ENCODE measurements at regions of chr3 and their contacts with region 1.

Region 1: GRCh38 chr3:190017521-190018288 is 103.0 kb downstream of the P3H2 start:
- DNase-seq: peak; percentile 48
- H3K4me3 ChIP-seq: no peak overlapping the region
- H3K27ac ChIP-seq: no peak overlapping the region
- H3K4me1 ChIP-seq: no peaks in the 10 kb centered on the region
- H3K27me3 ChIP-seq: no peaks in the 10 kb centered on the region
- CTCF ChIP-seq: peak; percentile 24

Region 2: GRCh38 chr3:189786479-189787064 is 231.1 kb before region 1 on chr3:
- intact Hi-C with region 1: no loop called
- DNase-seq: no peak
- H3K4me3 ChIP-seq: no peak overlapping the region
- H3K27ac ChIP-seq: no peak overlapping the region
- H3K4me1 ChIP-seq: no peaks in the 10 kb centered on the region
- H3K27me3 ChIP-seq: no peaks in the 10 kb centered on the region
- CTCF ChIP-seq: no peak

Region 3: DNA sequence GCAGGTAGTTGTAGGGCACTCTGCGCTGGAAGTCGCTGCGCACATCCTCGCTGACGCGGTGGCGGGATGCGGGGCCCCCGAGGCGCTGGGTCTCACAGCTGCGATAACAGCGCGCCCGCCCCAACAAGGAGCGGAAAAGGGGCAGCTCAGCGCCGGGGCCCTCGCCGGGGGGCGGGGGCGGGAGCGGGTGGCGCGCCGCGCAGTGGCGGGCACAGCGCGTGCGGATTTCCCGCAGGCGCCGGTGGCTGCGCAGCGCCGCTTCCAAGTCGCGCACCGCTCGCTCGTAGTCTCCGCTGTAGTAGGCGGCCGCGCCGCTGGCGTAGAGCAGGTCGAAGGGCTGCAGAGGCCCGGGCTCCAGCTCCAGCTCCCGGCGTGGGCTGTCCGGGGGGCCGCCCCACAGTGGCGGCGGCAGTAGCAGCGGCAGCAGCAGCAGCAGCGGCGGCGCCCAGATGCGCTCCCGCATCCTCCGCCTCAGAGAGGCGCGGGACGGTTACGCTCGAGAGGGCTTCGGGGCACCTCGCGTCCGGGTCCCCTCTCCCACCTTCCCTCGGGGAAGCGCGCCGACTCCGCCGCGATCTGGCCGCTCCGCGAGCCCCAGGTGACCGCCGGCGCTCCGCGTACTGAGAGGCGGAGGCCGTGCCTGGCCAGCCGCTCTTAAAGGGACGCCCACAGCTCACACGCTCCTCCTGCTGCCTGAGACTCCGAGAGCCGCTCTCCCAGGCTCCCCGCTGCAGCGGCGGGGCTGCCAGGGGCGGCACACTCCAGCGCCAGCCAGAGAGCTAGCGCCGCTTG is 102.8 kb after region 1 on chr3 and contains the start of gene P3H2:
- intact Hi-C with region 1: loop called (anchors 10 kb)
- DNase-seq: peak; percentile 78
- H3K4me3 ChIP-seq: peak within 1 kb of the TSS; percentile 82
- H3K27ac ChIP-seq: peak within 1 kb of the TSS; percentile 61
- H3K4me1 ChIP-seq: no peaks in the 10 kb centered on the region
- H3K27me3 ChIP-seq: no peaks in the 10 kb centered on the region
- CTCF ChIP-seq: no peak
- total RNA-seq, gene P3H2: 14.6 to 22.2 TPM

Region 4: GRCh38 chr3:190205739-190206138 is 188.0 kb after region 1 on chr3:
- intact Hi-C with region 1: loop called (anchors 5 kb)
- DNase-seq: no peak
- H3K4me3 ChIP-seq: no peak overlapping the region
- H3K27ac ChIP-seq: no peak overlapping the region
- H3K4me1 ChIP-seq: no peaks in the 10 kb centered on the region
- H3K27me3 ChIP-seq: no peaks in the 10 kb centered on the region
- CTCF ChIP-seq: no peak

Measured in colonic mucosa (tissue), 4 donors.